Caco-2 (cell line): ENCODE measurements at regions of chr1 and their contacts with region 1.

Region 1: GRCh38 chr1:215146341-215146826 is 63.8 kb downstream of the KCNK2 start:
- DNase-seq: peak in 1 of 2 experiments; percentile 29
- H3K4me3 ChIP-seq: no peak overlapping the region
- H3K4me3 Mint-ChIP-seq: no peak overlapping the region
- H3K27ac Mint-ChIP-seq: no peak overlapping the region
- H3K4me1 ChIP-seq: no peaks in the 10 kb centered on the region
- H3K4me1 Mint-ChIP-seq: no peaks in the 10 kb centered on the region
- H3K27me3 ChIP-seq: no peaks in the 10 kb centered on the region
- H3K27me3 Mint-ChIP-seq: no peaks in the 10 kb centered on the region
- CTCF ChIP-seq: peak; percentile 59 to 69

Region 2: GRCh38 chr1:214632091-214632490 is 514.3 kb before region 1 on chr1:
- CTCF ChIA-PET with region 1: no interaction called
- POLR2A ChIA-PET with region 1: no interaction called
- intact Hi-C with region 1: loop called (anchors 1 kb)
- DNase-seq: no peak
- H3K4me3 ChIP-seq: no peak overlapping the region
- H3K4me3 Mint-ChIP-seq: no peak overlapping the region
- H3K27ac Mint-ChIP-seq: no peak overlapping the region
- H3K4me1 ChIP-seq: no peaks in the 10 kb centered on the region
- H3K4me1 Mint-ChIP-seq: no peaks in the 10 kb centered on the region
- H3K27me3 ChIP-seq: no peaks in the 10 kb centered on the region
- H3K27me3 Mint-ChIP-seq: no peaks in the 10 kb centered on the region
- CTCF ChIP-seq: no peak

Region 3: DNA sequence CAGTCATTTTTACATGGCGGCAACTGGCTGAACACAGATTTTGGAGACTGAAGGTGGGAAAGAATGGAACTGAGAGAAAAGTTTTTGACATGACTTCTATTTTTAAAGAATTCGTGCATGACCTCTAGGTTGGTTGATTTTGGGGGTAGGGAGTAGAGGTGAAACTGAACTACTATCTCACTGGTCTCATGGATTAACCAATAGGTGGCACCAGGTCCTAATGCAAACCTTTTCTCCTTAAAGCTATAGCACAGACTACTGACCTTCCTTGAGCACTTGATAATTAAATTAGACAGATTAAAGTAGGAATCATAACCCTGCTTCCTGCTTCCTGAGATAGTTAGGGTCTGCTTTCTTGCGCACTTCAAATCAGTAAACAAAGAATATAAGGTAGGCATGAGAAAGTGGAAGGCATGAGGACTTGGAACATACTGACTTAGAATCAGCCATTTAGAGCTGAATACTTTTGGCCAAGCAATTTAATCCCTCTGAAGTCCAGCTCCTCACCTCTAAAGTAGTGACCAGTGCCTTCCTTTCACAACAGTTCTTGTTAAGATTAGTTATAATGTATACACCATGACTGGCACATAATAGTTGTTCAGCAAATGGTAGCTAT is 337.4 kb before region 1 on chr1:
- CTCF ChIA-PET with region 1: no interaction called
- POLR2A ChIA-PET with region 1: no interaction called
- intact Hi-C with region 1: loop called (anchors 1 kb)
- DNase-seq: no peak
- H3K4me3 ChIP-seq: no peak overlapping the region
- H3K4me3 Mint-ChIP-seq: no peak overlapping the region
- H3K27ac Mint-ChIP-seq: no peak overlapping the region
- H3K4me1 ChIP-seq: no peaks in the 10 kb centered on the region
- H3K4me1 Mint-ChIP-seq: no peaks in the 10 kb centered on the region
- H3K27me3 ChIP-seq: no peaks in the 10 kb centered on the region
- H3K27me3 Mint-ChIP-seq: no peaks in the 10 kb centered on the region
- CTCF ChIP-seq: no peak

Region 4: DNA sequence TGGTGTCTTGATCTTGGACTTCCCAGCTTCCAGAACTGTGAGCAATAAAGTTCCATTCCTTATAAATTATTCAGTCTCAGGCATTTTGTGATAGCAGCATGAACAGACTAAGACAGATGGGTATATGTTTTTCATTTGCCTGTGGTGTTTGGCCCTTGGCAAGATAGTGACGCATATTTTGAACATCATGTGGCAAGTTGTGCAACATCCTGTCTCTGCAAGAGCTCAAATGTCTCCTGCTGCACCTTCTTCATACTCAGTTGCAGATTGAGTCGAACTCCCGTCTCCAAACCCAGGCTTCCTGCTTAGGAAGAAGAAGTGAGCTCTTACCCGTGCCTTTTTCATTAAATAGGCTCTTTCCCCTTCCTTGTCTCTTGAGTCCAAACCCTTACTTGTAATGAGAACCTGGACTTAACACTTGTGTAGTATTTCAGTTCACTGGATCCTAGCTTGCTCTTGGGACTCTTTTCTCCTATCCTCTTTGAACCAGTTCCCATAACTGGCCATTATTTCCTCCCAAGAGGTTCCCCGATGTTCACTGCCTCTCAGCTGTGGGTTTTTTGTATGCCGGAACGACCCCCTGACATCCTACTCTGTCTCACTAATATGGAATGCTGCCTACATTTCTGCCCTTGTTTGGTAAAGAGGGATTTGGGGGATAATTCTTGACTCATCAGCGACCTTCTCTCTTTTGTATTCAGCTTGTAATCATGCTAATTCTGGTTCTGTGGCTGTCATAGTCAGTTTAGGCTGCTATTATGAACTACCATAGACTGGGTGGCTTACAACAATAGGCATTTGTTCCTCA is 188.8 kb before region 1 on chr1:
- CTCF ChIA-PET with region 1: no interaction called
- POLR2A ChIA-PET with region 1: no interaction called
- intact Hi-C with region 1: loop called (anchors 1 kb)
- DNase-seq: no peak
- H3K4me3 ChIP-seq: no peak overlapping the region
- H3K4me3 Mint-ChIP-seq: no peak overlapping the region
- H3K27ac Mint-ChIP-seq: no peak overlapping the region
- H3K4me1 ChIP-seq: no peaks in the 10 kb centered on the region
- H3K4me1 Mint-ChIP-seq: peaks cover 4% of the 10 kb centered on the region
- H3K27me3 ChIP-seq: no peaks in the 10 kb centered on the region
- H3K27me3 Mint-ChIP-seq: no peaks in the 10 kb centered on the region
- CTCF ChIP-seq: no peak

Region 5: DNA sequence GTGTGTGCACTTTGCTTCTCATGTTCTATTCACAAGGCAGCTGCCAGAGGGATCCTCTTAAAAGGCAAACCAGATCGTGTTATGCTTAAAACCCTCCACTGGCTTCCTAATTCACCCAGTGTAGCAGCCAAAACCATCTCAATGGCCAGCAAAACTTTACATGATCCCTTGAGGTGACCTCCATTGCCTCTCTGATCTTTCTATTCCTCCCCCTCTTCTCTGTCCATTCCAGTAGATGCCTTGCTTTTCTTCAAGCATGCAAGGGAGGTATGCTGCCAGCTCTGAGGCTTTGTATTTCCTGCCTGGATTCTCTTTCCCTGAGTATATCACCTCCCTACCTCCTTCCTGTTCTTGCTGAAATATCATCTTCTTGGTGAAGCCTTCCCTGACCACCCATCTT is 157.0 kb before region 1 on chr1:
- CTCF ChIA-PET with region 1: no interaction called
- POLR2A ChIA-PET with region 1: no interaction called
- intact Hi-C with region 1: no loop called
- DNase-seq: no peak
- H3K4me3 ChIP-seq: no peak overlapping the region
- H3K4me3 Mint-ChIP-seq: no peak overlapping the region
- H3K27ac Mint-ChIP-seq: no peak overlapping the region
- H3K4me1 ChIP-seq: no peaks in the 10 kb centered on the region
- H3K4me1 Mint-ChIP-seq: peaks cover under 1% of the 10 kb centered on the region
- H3K27me3 ChIP-seq: no peaks in the 10 kb centered on the region
- H3K27me3 Mint-ChIP-seq: peaks cover 18% of the 10 kb centered on the region
- CTCF ChIP-seq: no peak